Activated CD4-positive, alpha-beta memory T cell treated with anti-CD3 and anti-CD28 coated beads for 36 hours (primary cell): ENCODE measurements at regions of chr5 and their contacts with region 1.

Region 1: GRCh38 chr5:79990598-79991507 is at the start of gene MTX3:
- DNase-seq: peak; percentile 93
- H3K4me3 Mint-ChIP-seq: peak within 1 kb of the TSS; percentile 84
- H3K27ac Mint-ChIP-seq: peak within 1 kb of the TSS; percentile 96
- H3K4me1 Mint-ChIP-seq: peaks cover 40% of the 10 kb centered on the region
- H3K27me3 Mint-ChIP-seq: peaks cover 2% of the 10 kb centered on the region
- total RNA-seq, gene MTX3: 13.3 to 16.8 TPM

Region 2: DNA sequence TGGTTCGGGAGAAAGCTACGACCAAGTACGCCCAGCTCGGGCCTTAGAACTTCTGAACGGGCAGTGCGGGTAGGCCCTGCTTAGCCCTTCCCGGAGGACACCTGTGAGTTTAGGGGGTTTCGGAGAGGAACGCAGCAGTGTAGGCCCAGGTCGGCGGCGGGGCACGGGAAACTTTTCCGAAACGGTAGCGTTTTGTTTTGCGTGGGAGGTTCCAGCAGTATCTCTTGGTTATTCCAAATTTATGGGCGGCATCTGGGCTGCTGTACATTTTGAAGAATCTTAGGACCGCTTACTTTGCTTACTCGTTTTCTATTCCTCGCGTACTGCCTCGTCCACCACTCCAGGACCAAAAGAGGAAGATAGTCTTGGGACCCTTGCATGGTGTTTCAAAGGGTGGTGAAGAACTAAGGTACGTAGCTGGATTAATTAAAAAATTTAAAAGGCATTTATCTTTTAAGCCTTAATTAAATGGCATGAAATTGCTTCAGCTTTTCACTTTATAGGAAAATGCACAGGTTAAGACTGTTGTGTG is 378.1 kb before region 1 on chr5:
- CTCF ChIA-PET with region 1: no interaction called
- POLR2A ChIA-PET with region 1: no interaction called
- intact Hi-C with region 1: loop called (anchors 5 kb)
- DNase-seq: no peak
- H3K4me3 Mint-ChIP-seq: peak overlapping the region; percentile 98
- H3K27ac Mint-ChIP-seq: peak overlapping the region; percentile 95
- H3K4me1 Mint-ChIP-seq: peaks cover 31% of the 10 kb centered on the region
- H3K27me3 Mint-ChIP-seq: no peaks in the 10 kb centered on the region

Region 3: DNA sequence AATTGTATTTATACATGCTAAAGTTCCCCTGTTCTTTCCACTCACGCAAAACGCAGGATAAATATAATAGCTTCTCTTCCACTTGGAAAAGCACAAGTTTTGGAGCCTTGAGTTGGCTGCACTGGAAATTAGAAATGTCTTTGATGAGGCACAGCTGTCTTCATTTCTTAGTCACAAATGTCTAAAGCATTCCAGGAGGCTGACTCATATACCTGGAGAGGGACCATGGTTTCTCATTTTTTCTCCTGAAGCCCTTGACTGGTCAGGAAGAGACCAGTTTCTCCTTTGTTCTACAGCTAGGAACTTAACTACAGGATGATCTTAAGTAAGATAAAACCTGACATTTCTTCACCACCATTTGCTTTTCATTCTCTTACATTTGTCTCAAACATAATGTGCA is 16.0 kb before region 1 on chr5:
- CTCF ChIA-PET with region 1: no interaction called
- POLR2A ChIA-PET with region 1: interaction called, 19 read pairs
- intact Hi-C with region 1: no loop called
- DNase-seq: no peak
- H3K4me3 Mint-ChIP-seq: no peak overlapping the region
- H3K27ac Mint-ChIP-seq: no peak overlapping the region
- H3K4me1 Mint-ChIP-seq: peaks cover 3% of the 10 kb centered on the region
- H3K27me3 Mint-ChIP-seq: peaks cover 3% of the 10 kb centered on the region

Region 4: GRCh38 chr5:80083101-80083890 is 92.4 kb after region 1 on chr5:
- CTCF ChIA-PET with region 1: interaction called, 13 read pairs
- POLR2A ChIA-PET with region 1: interaction called, 3 read pairs
- intact Hi-C with region 1: loop called (anchors 2 kb)
- DNase-seq: peak; percentile 31
- H3K4me3 Mint-ChIP-seq: peak overlapping the region; percentile 54
- H3K27ac Mint-ChIP-seq: peak overlapping the region; percentile 50
- H3K4me1 Mint-ChIP-seq: peaks cover 11% of the 10 kb centered on the region
- H3K27me3 Mint-ChIP-seq: no peaks in the 10 kb centered on the region

Region 5: DNA sequence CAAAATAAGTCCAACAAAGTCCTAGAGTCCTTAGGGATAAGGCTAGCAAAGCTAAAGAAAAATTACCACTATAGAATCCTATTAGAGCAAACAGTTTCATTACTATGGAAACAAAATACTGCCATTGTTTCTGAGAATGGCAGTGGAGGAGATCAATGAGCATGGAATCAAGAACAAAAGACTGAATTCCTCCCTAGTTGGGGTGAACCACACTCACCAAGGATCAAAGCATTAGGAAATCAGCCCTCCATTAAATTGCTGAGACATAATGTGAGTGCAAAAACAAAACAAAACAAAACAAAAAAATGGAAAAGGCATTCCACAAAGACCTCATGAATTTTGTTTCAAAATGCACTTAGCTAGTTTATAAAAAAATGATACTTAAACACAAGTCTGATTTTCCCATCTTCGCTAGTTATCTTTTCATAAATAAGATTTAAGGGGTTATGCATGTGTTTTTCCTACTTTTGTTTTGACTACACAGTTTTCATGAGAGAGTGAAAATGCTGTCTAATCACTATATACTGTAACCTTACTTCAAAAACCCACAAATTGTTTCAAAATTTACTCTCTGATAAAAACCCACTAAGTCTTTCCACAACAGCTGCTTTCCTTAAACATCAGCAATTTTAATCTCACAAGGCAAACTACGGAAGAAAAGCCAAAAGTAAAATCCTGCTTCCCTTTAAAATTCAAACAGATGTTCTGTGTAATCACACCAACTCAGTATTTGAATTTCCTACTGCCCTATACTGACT is 255.3 kb after region 1 on chr5:
- CTCF ChIA-PET with region 1: no interaction called
- POLR2A ChIA-PET with region 1: no interaction called
- intact Hi-C with region 1: loop called (anchors 2 kb)
- DNase-seq: no peak
- H3K4me3 Mint-ChIP-seq: peak overlapping the region; percentile 14
- H3K27ac Mint-ChIP-seq: peak overlapping the region; percentile 72
- H3K4me1 Mint-ChIP-seq: peaks cover 66% of the 10 kb centered on the region
- H3K27me3 Mint-ChIP-seq: no peaks in the 10 kb centered on the region